K562 (cell line): ENCODE measurements at regions of chr6 and their contacts with region 1.

Region 1: GRCh38 chr6:49636713-49637349 is at the start of gene RHAG:
- DNase-seq: peak; percentile 86 to 96 (median 90)
- ATAC-seq: peak; percentile 81
- H3K4me3 ChIP-seq: peak within 1 kb of the TSS; percentile 66
- H3K27ac ChIP-seq: peak within 1 kb of the TSS; percentile 96
- H3K4me1 ChIP-seq: peaks cover 0 to 31% of the 10 kb centered on the region in 2 experiments; a peak in 3 of 5 replicates
- H3K27me3 ChIP-seq: no peaks in the 10 kb centered on the region
- CTCF ChIP-seq: no peak
- EP300 ChIP-seq: peak; percentile 87
- POLR2A ChIP-seq: peak; percentile 98
- RAD21 ChIP-seq: no peak
- polyA plus RNA-seq, gene RHAG: 1,125 to 1,202 TPM

Region 2: DNA sequence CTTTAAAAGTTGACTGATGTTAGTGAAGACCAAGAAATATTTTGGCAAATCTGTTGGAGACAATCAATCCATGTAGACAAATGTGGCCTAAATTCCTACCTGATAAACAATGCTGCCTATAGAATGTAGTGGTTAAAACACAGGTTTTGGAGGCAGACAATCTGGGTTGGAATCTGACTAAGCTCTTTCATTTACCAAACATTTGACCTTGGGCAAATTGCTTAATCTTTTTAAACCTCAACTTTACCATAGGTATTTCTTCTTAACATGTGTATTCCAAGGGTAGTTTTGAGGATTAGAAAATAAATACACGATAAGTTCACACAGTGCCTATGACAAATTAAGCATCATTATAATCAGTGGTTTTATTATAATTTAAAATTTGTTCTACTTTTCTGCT is 11.7 kb before region 1 on chr6:
- CTCF ChIA-PET with region 1: no interaction called
- POLR2A ChIA-PET with region 1: interaction called, 14 read pairs
- in situ Hi-C with region 1: no loop called
- intact Hi-C with region 1: no loop called
- DNase-seq: no peak
- ATAC-seq: no peak
- H3K4me3 ChIP-seq: no peak overlapping the region
- H3K27ac ChIP-seq: no peak overlapping the region
- H3K4me1 ChIP-seq: peaks cover 0 to 7% of the 10 kb centered on the region in 2 experiments; a peak in 2 of 5 replicates
- H3K27me3 ChIP-seq: no peaks in the 10 kb centered on the region
- CTCF ChIP-seq: no peak
- EP300 ChIP-seq: no peak
- POLR2A ChIP-seq: no peak
- RAD21 ChIP-seq: no peak

Region 3: GRCh38 chr6:49666930-49667757 is 30.3 kb after region 1 on chr6:
- CTCF ChIA-PET with region 1: no interaction called
- POLR2A ChIA-PET with region 1: interaction called, 7 read pairs
- in situ Hi-C with region 1: no loop called
- intact Hi-C with region 1: loop called (anchors 2 kb)
- DNase-seq: peak; percentile 32 to 75 (median 52)
- ATAC-seq: peak; percentile 86
- H3K4me3 ChIP-seq: no peak overlapping the region
- H3K27ac ChIP-seq: peak overlapping the region; percentile 34
- H3K4me1 ChIP-seq: peaks cover 8 to 28% of the 10 kb centered on the region in 2 experiments; a peak in 4 of 5 replicates
- H3K27me3 ChIP-seq: no peaks in the 10 kb centered on the region
- CTCF ChIP-seq: no peak
- EP300 ChIP-seq: peak; percentile 87
- POLR2A ChIP-seq: no peak
- RAD21 ChIP-seq: no peak

Region 4: GRCh38 chr6:49739423-49739822 is 102.6 kb after region 1 on chr6:
- CTCF ChIA-PET with region 1: no interaction called
- POLR2A ChIA-PET with region 1: interaction called, 4 read pairs
- in situ Hi-C with region 1: no loop called
- intact Hi-C with region 1: loop called (anchors 2 kb)
- DNase-seq: no peak
- ATAC-seq: no peak
- H3K4me3 ChIP-seq: no peak overlapping the region
- H3K27ac ChIP-seq: no peak overlapping the region
- H3K4me1 ChIP-seq: peaks cover 0 to 29% of the 10 kb centered on the region in 2 experiments; a peak in 4 of 5 replicates
- H3K27me3 ChIP-seq: no peaks in the 10 kb centered on the region
- CTCF ChIP-seq: no peak
- EP300 ChIP-seq: no peak
- POLR2A ChIP-seq: no peak
- RAD21 ChIP-seq: no peak

Region 5: DNA sequence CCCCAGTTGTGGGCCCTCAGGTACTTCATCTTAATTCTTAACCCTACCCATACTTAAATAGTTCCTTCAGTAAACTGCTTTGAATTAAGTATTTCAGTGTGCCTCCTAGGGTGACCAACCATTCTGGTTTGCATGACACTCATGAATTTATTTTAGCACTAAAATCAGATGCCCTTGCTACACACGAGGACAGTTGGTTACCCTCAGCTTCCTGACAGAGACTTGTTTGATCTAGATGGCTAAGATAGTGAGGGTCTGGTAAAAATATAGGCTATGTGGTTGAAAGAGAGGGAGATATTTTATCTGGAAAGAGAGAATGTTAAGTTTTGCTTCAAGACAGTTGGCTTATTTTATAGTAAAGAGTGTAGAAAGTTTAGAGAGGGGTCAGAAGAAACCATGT is 139.6 kb after region 1 on chr6:
- CTCF ChIA-PET with region 1: no interaction called
- POLR2A ChIA-PET with region 1: interaction called, 5 read pairs
- in situ Hi-C with region 1: no loop called
- intact Hi-C with region 1: loop called (anchors 5 kb)
- DNase-seq: no peak
- ATAC-seq: peak; percentile 29; the same call in 2 of the 3 replicates
- H3K4me3 ChIP-seq: no peak overlapping the region
- H3K27ac ChIP-seq: peak overlapping the region; percentile 37; the same call in 1 of the 3 replicates
- H3K4me1 ChIP-seq: peaks cover 8 to 28% of the 10 kb centered on the region in 2 experiments
- H3K27me3 ChIP-seq: no peaks in the 10 kb centered on the region
- CTCF ChIP-seq: no peak
- EP300 ChIP-seq: no peak
- POLR2A ChIP-seq: no peak
- RAD21 ChIP-seq: no peak

Region 6: GRCh38 chr6:49949062-49949461 is 312.2 kb after region 1 on chr6:
- CTCF ChIA-PET with region 1: no interaction called
- POLR2A ChIA-PET with region 1: interaction called, 5 read pairs
- in situ Hi-C with region 1: no loop called
- intact Hi-C with region 1: loop called (anchors 5 kb)
- DNase-seq: peak; percentile 15 to 45 (median 18)
- ATAC-seq: peak; percentile 78
- H3K4me3 ChIP-seq: peak overlapping the region; percentile 43
- H3K27ac ChIP-seq: peak overlapping the region; percentile 76
- H3K4me1 ChIP-seq: no peaks in the 10 kb centered on the region
- H3K27me3 ChIP-seq: no peaks in the 10 kb centered on the region
- CTCF ChIP-seq: no peak
- EP300 ChIP-seq: no peak
- POLR2A ChIP-seq: no peak
- RAD21 ChIP-seq: no peak